B cell (primary cell): ENCODE measurements at regions of chr22 and their contacts with region 1.

Region 1: GRCh38 chr22:24400726-24401596 is 26.4 kb upstream of the ADORA2A start:
- DNase-seq: peak; percentile 57
- ATAC-seq: peak; percentile 60
- H3K4me3 ChIP-seq: peak overlapping the region in 4 of 5 experiments; percentile 18 to 52 (median 24)
- H3K4me3 Mint-ChIP-seq: peak overlapping the region; percentile 82
- H3K27ac ChIP-seq: peak overlapping the region; percentile 75 to 81
- H3K27ac Mint-ChIP-seq: peak overlapping the region; percentile 87
- H3K4me1 ChIP-seq: peaks cover 10 to 53% of the 10 kb centered on the region in 2 donors
- H3K4me1 Mint-ChIP-seq: peaks cover 54% of the 10 kb centered on the region
- H3K27me3 ChIP-seq: no peaks in the 10 kb centered on the region
- H3K27me3 Mint-ChIP-seq: no peaks in the 10 kb centered on the region
- CTCF ChIP-seq: no peak

Region 2: GRCh38 chr22:24325105-24325757 is 75.7 kb before region 1 on chr22:
- CTCF ChIA-PET with region 1: no interaction called
- POLR2A ChIA-PET with region 1: no interaction called
- intact Hi-C with region 1: loop called (anchors 5 kb)
- DNase-seq: peak; percentile 71
- ATAC-seq: peak; percentile 76
- H3K4me3 ChIP-seq: no peak overlapping the region
- H3K4me3 Mint-ChIP-seq: no peak overlapping the region
- H3K27ac ChIP-seq: no peak overlapping the region
- H3K27ac Mint-ChIP-seq: peak overlapping the region; percentile 26
- H3K4me1 ChIP-seq: peaks cover 7 to 8% of the 10 kb centered on the region in 2 donors
- H3K4me1 Mint-ChIP-seq: peaks cover 19% of the 10 kb centered on the region
- H3K27me3 ChIP-seq: no peaks in the 10 kb centered on the region
- H3K27me3 Mint-ChIP-seq: no peaks in the 10 kb centered on the region
- CTCF ChIP-seq: peak; percentile 85

Region 3: DNA sequence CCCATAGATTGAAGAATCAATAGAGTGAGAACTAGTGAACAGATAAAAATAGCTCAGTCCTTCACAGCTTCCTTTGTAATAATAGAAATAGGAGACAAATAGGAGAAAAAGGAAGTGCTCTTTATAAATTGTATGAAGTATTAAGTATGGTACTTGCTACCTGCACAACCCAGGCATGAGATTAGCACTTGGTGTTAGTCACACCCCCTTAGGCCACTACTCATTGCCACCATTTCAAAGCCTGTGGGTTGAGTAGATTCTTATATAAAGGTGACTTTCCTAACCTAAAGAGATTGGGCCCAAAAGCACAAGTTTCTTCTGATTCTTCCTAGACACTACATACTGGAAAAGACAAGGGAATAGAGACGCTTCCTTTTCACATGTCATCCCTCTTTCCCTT is 11.3 kb before region 1 on chr22:
- CTCF ChIA-PET with region 1: no interaction called
- POLR2A ChIA-PET with region 1: interaction called, 10 read pairs
- intact Hi-C with region 1: no loop called
- DNase-seq: no peak
- ATAC-seq: no peak
- H3K4me3 ChIP-seq: no peak overlapping the region
- H3K4me3 Mint-ChIP-seq: no peak overlapping the region
- H3K27ac ChIP-seq: no peak overlapping the region
- H3K27ac Mint-ChIP-seq: no peak overlapping the region
- H3K4me1 ChIP-seq: no peaks in the 10 kb centered on the region
- H3K4me1 Mint-ChIP-seq: peaks cover 4% of the 10 kb centered on the region
- H3K27me3 ChIP-seq: no peaks in the 10 kb centered on the region
- H3K27me3 Mint-ChIP-seq: no peaks in the 10 kb centered on the region
- CTCF ChIP-seq: no peak